Activated CD4-positive, alpha-beta memory T cell treated with anti-CD3 and anti-CD28 coated beads, Interleukin-2, amount 10 ng/mL, durations not matched to agents 7 days and 5 days (primary cell): ENCODE measurements at regions of chr1 and their contacts with region 1.

Region 1: DNA sequence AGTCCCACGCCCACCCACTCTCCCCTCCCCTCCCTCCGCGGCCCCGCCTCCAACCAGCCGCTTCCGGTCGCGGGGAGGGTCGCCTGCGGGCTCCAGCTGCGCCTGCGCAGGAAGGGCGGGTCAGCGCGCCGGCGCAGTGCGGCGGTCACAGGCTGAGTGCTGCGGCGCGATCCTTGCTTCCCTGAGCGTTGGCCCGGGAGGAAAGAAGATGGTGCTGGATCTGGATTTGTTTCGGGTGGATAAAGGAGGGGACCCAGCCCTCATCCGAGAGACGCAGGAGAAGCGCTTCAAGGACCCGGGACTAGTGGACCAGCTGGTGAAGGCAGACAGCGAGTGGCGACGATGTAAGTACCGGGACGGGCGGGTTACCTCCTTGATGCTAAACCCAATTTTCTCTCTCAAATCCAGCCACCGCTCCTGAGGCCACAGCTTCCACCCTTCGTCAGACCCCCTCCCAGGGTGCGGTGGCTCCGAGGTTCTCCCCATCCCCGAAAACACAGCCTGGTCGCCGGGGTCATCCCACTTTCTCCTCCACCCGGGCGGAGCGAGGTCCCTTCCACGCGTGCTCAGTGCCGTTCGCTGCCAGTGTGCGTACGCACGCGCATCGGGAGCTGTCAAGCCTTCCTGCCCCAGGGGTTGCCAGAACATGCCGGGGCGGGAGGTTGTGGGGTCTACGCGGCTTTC is at the start of gene SARS1:
- DNase-seq: peak; percentile 90
- H3K4me3 Mint-ChIP-seq: peak within 1 kb of the TSS; percentile 98
- H3K27ac Mint-ChIP-seq: peak within 1 kb of the TSS; percentile 87
- H3K4me1 Mint-ChIP-seq: peaks cover 36% of the 10 kb centered on the region
- H3K27me3 Mint-ChIP-seq: peaks cover 7% of the 10 kb centered on the region
- total RNA-seq, gene SARS1: 193 to 195 TPM

Region 2: GRCh38 chr1:108780937-108781574 is 432.9 kb before region 1 on chr1:
- CTCF ChIA-PET with region 1: no interaction called
- POLR2A ChIA-PET with region 1: no interaction called
- DNase-seq: no peak
- H3K4me3 Mint-ChIP-seq: no peak overlapping the region
- H3K27ac Mint-ChIP-seq: no peak overlapping the region
- H3K4me1 Mint-ChIP-seq: no peaks in the 10 kb centered on the region
- H3K27me3 Mint-ChIP-seq: no peaks in the 10 kb centered on the region

Region 3: DNA sequence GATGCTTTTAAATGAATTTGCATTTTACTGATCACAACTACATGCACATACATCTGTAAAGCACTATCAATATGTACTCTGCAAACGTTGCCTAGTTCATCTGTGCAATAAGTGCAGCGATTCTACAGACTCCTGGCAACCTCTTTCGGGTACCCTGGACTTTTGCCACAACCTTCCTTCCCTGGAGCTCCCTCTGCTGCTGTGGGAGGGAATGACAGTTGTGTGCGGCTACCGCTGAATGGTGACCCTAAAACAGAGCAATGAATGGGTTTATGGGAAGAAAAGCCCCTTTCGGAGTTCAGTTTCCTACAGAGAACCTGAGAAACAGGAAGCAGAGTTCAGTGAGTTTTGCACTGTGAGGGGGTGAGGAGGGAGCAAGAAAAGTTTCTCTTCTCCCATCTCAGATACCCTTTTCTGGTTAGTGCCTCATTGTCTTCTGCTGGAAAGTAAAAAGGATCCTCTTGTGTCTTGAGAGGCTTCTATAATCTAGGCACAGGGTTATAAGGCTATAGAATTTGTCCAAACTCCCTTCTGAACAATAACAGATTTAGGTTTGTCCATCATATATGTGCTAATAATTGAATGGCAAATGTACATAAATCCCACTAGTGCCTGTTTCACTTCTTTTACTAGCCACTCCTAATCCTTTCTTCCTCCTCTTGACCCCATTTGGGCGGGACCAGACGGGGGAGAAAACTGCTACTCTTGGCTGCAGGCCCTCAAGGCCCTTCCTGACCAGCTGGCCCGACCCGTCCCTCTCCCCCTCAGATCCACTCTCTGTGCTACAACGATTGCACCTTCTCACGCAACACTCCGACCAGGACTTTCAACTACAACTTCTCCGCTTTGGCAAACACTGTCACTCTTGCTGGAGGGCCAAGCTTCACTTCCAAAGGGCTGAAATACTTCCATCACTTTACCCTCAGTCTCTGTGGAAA is 20.0 kb before region 1 on chr1:
- CTCF ChIA-PET with region 1: interaction called, 12 read pairs
- POLR2A ChIA-PET with region 1: interaction called, 11 read pairs
- DNase-seq: peak; percentile 68
- H3K4me3 Mint-ChIP-seq: no peak overlapping the region
- H3K27ac Mint-ChIP-seq: no peak overlapping the region
- H3K4me1 Mint-ChIP-seq: peaks cover 11% of the 10 kb centered on the region
- H3K27me3 Mint-ChIP-seq: no peaks in the 10 kb centered on the region

Region 4: GRCh38 chr1:109226078-109226445 is 12.1 kb after region 1 on chr1:
- CTCF ChIA-PET with region 1: interaction called, 3 read pairs
- POLR2A ChIA-PET with region 1: interaction called, 28 read pairs
- DNase-seq: no peak
- H3K4me3 Mint-ChIP-seq: no peak overlapping the region
- H3K27ac Mint-ChIP-seq: no peak overlapping the region
- H3K4me1 Mint-ChIP-seq: peaks cover 15% of the 10 kb centered on the region
- H3K27me3 Mint-ChIP-seq: no peaks in the 10 kb centered on the region

Region 5: DNA sequence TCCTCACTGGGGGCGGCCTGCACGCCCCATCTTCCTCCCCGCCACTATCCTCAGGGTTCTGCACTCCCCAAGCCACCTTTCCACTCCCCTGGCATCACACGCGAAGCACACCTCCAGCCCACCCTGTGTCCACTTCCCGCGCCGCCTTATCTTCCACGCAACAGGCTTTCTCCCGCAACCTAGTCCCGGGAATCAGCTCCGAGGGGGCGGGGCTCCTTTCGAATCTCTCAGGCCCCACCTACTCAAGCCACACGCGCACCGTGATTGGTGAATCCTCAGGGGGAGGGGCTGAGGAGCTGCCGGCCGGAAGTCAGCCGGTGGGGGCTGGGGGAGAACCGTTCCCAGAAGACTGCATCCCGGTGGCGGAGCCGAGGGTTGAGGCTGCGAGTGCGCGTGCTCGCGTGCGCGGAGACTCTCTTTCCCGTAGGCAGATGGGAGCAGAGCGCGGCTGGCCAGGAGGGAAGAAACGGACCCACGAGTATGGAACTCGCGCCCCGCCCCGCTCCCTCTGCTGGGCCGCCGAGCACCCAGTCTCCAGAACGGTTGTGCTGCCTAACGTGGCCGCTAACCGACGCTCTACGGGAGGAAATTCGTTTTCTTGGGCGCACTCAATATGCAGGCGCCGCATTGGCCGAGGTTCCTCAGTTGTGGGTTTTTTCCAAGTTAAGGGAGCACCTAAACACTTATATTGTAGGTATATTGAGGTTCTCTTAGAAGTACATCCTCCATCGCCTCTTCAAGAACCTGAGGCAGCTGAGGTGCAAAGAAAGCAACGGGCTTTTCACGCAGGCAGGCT is 69.2 kb after region 1 on chr1 and contains the start of gene PSRC1:
- CTCF ChIA-PET with region 1: interaction called, 6 read pairs
- POLR2A ChIA-PET with region 1: interaction called, 16 read pairs
- DNase-seq: peak; percentile 92
- H3K4me3 Mint-ChIP-seq: peak within 1 kb of the TSS; percentile 99
- H3K27ac Mint-ChIP-seq: peak within 1 kb of the TSS; percentile 85
- H3K4me1 Mint-ChIP-seq: peaks cover 33% of the 10 kb centered on the region
- H3K27me3 Mint-ChIP-seq: peaks cover 3% of the 10 kb centered on the region
- total RNA-seq, gene PSRC1: 27.0 to 28.7 TPM